Heart left ventricle (tissue), 16 donors: ENCODE measurements at regions of chr12 and their contacts with region 1.

Region 1: DNA sequence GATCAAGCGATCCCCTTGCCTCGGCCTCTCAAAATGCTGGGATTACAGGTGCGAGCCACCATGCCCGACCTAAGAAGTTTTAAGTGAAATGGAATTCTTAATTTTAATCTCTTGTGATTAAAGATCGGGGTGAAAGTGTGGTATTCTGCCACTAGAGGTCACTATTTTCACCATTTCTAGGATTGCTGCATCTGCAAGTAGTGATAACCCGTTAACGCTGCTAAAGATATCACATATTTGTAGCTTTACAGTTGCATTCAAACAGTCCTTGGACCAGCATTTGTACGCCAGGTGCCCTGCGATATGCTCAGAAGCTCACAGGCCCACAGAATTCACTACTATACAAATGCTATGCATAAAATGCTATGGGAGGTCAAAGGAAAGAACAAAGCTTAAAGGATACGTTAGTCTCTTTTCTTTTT is 19.3 kb downstream of the CCDC62 start:
- DNase-seq: no peak
- ATAC-seq: peak in 2 of 4 donors; percentile 54 to 63
- H3K4me3 ChIP-seq: no peak overlapping the region
- H3K27ac ChIP-seq: no peak overlapping the region
- H3K4me1 ChIP-seq: peaks cover 0 to 3% (median 0%) of the 10 kb centered on the region in 12 donors
- H3K27me3 ChIP-seq: no peaks in the 10 kb centered on the region
- CTCF ChIP-seq: peak; percentile 65 to 83 (median 76)
- POLR2A ChIP-seq: no peak

Region 2: DNA sequence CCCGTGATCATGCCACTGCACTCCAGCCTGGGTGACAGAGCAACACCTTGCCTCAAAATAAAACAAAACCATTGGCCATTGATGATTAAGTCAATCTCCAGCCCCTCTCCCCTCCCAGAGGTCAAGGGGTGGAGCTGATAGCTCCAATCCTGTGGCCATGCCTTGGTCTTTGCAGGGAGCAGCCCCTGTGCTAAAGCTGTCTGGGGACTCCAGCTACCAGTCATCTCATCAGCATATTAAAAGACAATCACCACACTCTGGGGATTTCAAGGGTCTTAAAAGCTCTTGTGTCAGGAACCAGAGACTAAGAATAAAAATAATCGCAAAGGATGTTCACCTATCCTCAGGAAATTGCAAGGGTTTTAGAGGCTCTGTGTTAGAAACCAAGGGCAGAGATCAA is 121.2 kb before region 1 on chr12:
- intact Hi-C with region 1: no loop called
- DNase-seq: no peak
- ATAC-seq: no peak
- H3K4me3 ChIP-seq: no peak overlapping the region
- H3K27ac ChIP-seq: no peak overlapping the region
- H3K4me1 ChIP-seq: no peaks in the 10 kb centered on the region
- H3K27me3 ChIP-seq: peaks cover 0 to 9% (median 0%) of the 10 kb centered on the region in 9 donors
- CTCF ChIP-seq: no peak
- POLR2A ChIP-seq: no peak

Region 3: GRCh38 chr12:122834104-122834920 is 40.6 kb after region 1 on chr12:
- intact Hi-C with region 1: loop called in 5 of 10 experiments (anchors 2 to 5 kb)
- DNase-seq: peak in 1 of 5 donors; percentile 54
- ATAC-seq: peak; percentile 17 to 55 (median 51)
- H3K4me3 ChIP-seq: peak overlapping the region; percentile 39 to 92 (median 73)
- H3K27ac ChIP-seq: peak overlapping the region in 11 of 12 donors; percentile 44 to 82 (median 77)
- H3K4me1 ChIP-seq: peaks cover 0 to 32% (median 14%) of the 10 kb centered on the region in 12 donors
- H3K27me3 ChIP-seq: peaks cover 0 to 8% (median 0%) of the 10 kb centered on the region in 9 donors
- CTCF ChIP-seq: peak in 4 of 12 donors; percentile 16 to 36 (median 28)
- POLR2A ChIP-seq: no peak

Region 4: GRCh38 chr12:122841544-122842321 is 48.0 kb after region 1 on chr12:
- intact Hi-C with region 1: loop called in 2 of 10 experiments (anchors 5 to 10 kb)
- DNase-seq: peak in 2 of 5 donors; percentile 72 to 85
- ATAC-seq: peak; percentile 74 to 83 (median 78)
- H3K4me3 ChIP-seq: no peak overlapping the region
- H3K27ac ChIP-seq: peak overlapping the region; percentile 79 to 98 (median 86)
- H3K4me1 ChIP-seq: peaks cover 3 to 56% (median 30%) of the 10 kb centered on the region in 12 donors
- H3K27me3 ChIP-seq: peaks cover 0 to 4% (median 0%) of the 10 kb centered on the region in 9 donors
- CTCF ChIP-seq: no peak
- POLR2A ChIP-seq: no peak

Region 5: GRCh38 chr12:122860346-122861090 is 66.8 kb after region 1 on chr12:
- intact Hi-C with region 1: loop called in 1 of 10 experiments (anchors 10 kb)
- DNase-seq: peak; percentile 85 to 92 (median 87)
- ATAC-seq: peak; percentile 56 to 80 (median 72)
- H3K4me3 ChIP-seq: no peak overlapping the region
- H3K27ac ChIP-seq: peak overlapping the region in 9 of 12 donors; percentile 21 to 72 (median 49)
- H3K4me1 ChIP-seq: peaks cover 0 to 48% (median 25%) of the 10 kb centered on the region in 12 donors
- H3K27me3 ChIP-seq: no peaks in the 10 kb centered on the region
- CTCF ChIP-seq: peak; percentile 83 to 95 (median 88)
- POLR2A ChIP-seq: no peak